PC-3 (cell line): ENCODE measurements at regions of chr9 and their contacts with region 1.

Region 1: DNA sequence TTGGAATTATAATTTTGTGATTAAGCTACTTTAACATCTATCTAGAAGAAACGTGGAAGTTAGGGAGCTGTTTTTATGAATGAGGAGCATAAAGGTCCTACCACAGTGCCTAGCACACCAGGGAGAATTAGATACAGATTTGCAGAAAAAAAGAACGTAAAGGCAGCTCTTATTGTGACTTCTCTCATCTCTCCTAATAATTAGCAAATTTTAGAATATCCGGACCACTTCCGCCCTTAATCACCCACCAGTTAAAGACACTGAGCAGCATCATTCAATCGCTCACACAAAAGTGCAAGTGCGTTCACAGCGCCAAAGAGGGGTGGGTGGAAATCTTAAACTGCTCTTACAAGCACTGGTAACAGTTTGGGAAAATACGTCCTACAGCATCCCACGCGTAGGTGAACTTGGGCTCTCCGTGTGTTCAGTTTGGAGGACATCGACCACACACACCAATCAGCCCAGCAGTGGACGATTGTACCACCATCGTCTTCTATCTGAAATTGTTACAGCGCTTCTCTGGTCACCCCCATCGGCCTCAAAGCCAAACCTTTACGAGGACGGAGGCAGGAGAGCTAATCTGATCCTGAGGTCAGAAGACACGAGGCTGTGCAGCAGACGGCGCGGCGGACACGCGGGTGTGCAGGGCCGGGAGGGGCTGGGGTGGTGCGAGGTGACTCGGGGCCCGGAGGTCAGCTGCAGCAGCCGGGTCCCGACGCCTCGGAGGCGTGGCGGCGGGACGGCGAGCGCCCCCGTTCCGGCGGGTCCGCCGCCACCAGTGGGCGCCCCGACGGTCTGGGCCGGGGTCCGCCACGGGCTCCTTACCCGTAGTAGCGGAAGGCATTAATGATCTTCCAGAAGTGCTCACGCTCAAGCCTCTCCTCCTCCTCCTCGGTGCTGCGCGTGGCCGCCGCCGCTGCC is 646 bp downstream of the CARNMT1 start:
- DNase-seq: peak; percentile 20
- ATAC-seq: peak; percentile 46
- H3K4me3 ChIP-seq: peak overlapping the region; percentile 94
- H3K27ac ChIP-seq: peak overlapping the region; percentile 65
- H3K4me1 ChIP-seq: peaks cover 9% of the 10 kb centered on the region
- H3K27me3 ChIP-seq: no peaks in the 10 kb centered on the region
- CTCF ChIP-seq: peak; percentile 33

Region 2: GRCh38 chr9:74742792-74743730 is 284.4 kb before region 1 on chr9:
- CTCF ChIA-PET with region 1: no interaction called
- POLR2A ChIA-PET with region 1: no interaction called
- intact Hi-C with region 1: no loop called
- DNase-seq: peak; percentile 42
- ATAC-seq: no peak
- H3K4me3 ChIP-seq: no peak overlapping the region
- H3K27ac ChIP-seq: no peak overlapping the region
- H3K4me1 ChIP-seq: no peaks in the 10 kb centered on the region
- H3K27me3 ChIP-seq: peaks cover 23% of the 10 kb centered on the region; the same call in 1 of the 2 replicates
- CTCF ChIP-seq: peak; percentile 71

Region 3: DNA sequence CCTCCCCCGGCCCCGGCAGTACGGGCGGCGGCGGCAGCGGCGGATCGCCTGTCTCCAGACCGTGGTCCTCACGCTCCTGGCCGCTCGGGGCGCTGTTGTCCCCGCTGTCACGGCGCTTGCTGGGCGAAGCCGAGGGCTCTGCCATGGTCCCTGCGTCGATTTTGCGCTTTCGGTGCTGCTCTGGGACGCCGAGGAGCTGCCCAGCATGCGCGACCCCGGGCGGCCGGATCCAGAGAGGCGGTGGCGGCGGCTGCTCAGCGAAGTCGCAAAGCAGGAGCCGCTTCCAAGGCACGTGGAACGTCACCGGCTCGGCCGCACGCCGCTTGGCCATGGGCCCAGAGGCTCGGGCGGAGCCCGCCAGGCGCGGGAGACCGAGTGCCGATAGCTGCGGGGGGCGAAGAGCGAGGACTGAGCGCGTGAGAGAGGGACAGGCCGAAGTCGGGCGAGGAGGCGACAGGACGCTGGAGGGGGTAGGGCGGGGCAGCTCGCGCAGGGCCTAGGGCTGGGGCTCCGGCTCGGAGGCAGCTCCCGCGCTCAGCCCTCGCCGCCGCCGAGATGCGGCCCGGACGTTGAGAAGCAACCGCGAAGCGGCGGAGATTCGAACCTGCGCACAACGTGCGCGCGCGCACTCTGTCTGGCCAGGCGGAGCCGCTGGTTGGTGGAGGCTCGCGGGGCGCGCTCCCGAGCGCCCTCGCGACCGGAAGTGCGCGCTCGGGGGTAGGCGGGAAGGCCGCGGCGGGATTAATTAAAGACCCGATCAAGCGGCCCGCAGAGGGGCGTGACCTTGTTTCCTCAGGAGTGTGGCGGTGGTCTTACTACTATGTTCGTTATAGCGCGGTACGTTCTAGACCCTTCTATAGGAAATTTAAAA is 74.9 kb before region 1 on chr9 and contains the start of gene C9orf40:
- CTCF ChIA-PET with region 1: interaction called, 5 read pairs
- POLR2A ChIA-PET with region 1: no interaction called
- intact Hi-C with region 1: loop called (anchors 5 kb)
- DNase-seq: peak; percentile 73
- ATAC-seq: peak; percentile 94
- H3K4me3 ChIP-seq: peak within 1 kb of the TSS; percentile 80
- H3K27ac ChIP-seq: peak within 1 kb of the TSS; percentile 40; the same call in 1 of the 2 replicates
- H3K4me1 ChIP-seq: no peaks in the 10 kb centered on the region
- H3K27me3 ChIP-seq: no peaks in the 10 kb centered on the region
- CTCF ChIP-seq: peak; percentile 59
- total RNA-seq, gene C9orf40: 4.7 and 7.7 TPM in 2 replicates

Region 4: GRCh38 chr9:75046725-75047345 is 19.4 kb after region 1 on chr9:
- CTCF ChIA-PET with region 1: no interaction called
- POLR2A ChIA-PET with region 1: no interaction called
- intact Hi-C with region 1: no loop called
- DNase-seq: no peak
- ATAC-seq: no peak
- H3K4me3 ChIP-seq: no peak overlapping the region
- H3K27ac ChIP-seq: no peak overlapping the region
- H3K4me1 ChIP-seq: no peaks in the 10 kb centered on the region
- H3K27me3 ChIP-seq: no peaks in the 10 kb centered on the region
- CTCF ChIP-seq: no peak

Region 5: GRCh38 chr9:75071530-75072124 is 44.2 kb after region 1 on chr9:
- CTCF ChIA-PET with region 1: no interaction called
- POLR2A ChIA-PET with region 1: interaction called, 3 read pairs
- intact Hi-C with region 1: loop called (anchors 2 kb)
- DNase-seq: peak; percentile 82
- ATAC-seq: peak; percentile 70
- H3K4me3 ChIP-seq: peak overlapping the region; percentile 25; the same call in 1 of the 2 replicates
- H3K27ac ChIP-seq: peak overlapping the region; percentile 56
- H3K4me1 ChIP-seq: peaks cover 13% of the 10 kb centered on the region
- H3K27me3 ChIP-seq: no peaks in the 10 kb centered on the region
- CTCF ChIP-seq: no peak

Region 6: GRCh38 chr9:75088260-75088905 is 60.9 kb after region 1 on chr9 and contains the start of gene OSTF1:
- CTCF ChIA-PET with region 1: no interaction called
- POLR2A ChIA-PET with region 1: interaction called, 6 read pairs
- intact Hi-C with region 1: loop called (anchors 1 kb)
- DNase-seq: peak; percentile 91
- ATAC-seq: peak; percentile 90
- H3K4me3 ChIP-seq: peak within 1 kb of the TSS; percentile 91
- H3K27ac ChIP-seq: peak within 1 kb of the TSS; percentile 59
- H3K4me1 ChIP-seq: 0 out of 2 replicates have a peak, but pooled peaks cover 9% of the 10 kb centered on the region
- H3K27me3 ChIP-seq: no peaks in the 10 kb centered on the region
- CTCF ChIP-seq: no peak
- total RNA-seq, gene OSTF1: 25.8 and 26.5 TPM in 2 replicates

Region 7: GRCh38 chr9:75130621-75131230 is 103.3 kb after region 1 on chr9:
- CTCF ChIA-PET with region 1: no interaction called
- POLR2A ChIA-PET with region 1: no interaction called
- intact Hi-C with region 1: no loop called
- DNase-seq: no peak
- ATAC-seq: no peak
- H3K4me3 ChIP-seq: no peak overlapping the region
- H3K27ac ChIP-seq: no peak overlapping the region
- H3K4me1 ChIP-seq: no peaks in the 10 kb centered on the region
- H3K27me3 ChIP-seq: no peaks in the 10 kb centered on the region
- CTCF ChIP-seq: no peak

Region 8: DNA sequence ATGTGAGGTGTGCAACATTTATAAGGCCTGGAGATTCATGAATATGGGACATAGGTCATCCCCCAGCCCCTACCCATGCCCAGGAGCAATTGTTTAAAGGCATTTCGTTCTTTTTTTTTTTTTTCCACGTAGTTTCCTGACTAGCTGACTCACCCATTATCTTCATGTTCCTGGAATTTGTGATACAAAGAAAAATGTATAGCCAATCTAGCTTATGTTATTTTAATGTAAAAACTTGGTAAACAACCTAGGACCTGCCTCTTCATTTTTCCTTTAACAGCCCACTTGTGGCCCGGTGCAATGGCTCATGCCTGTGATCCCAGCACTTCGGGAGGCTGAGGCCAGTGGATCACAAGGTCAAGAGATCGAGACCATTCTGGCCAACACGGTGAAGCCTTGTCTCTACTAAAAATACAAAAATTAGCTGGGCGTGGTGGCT is 142.2 kb after region 1 on chr9:
- CTCF ChIA-PET with region 1: no interaction called
- POLR2A ChIA-PET with region 1: interaction called, 21 read pairs
- intact Hi-C with region 1: no loop called
- DNase-seq: peak; percentile 60
- ATAC-seq: peak; percentile 57
- H3K4me3 ChIP-seq: no peak overlapping the region
- H3K27ac ChIP-seq: peak overlapping the region; percentile 37
- H3K4me1 ChIP-seq: peaks cover 32% of the 10 kb centered on the region
- H3K27me3 ChIP-seq: no peaks in the 10 kb centered on the region
- CTCF ChIP-seq: no peak